CD8-positive, alpha-beta T cell (primary cell): ENCODE measurements at regions of chr15 and their contacts with region 1.

Region 1: GRCh38 chr15:78264304-78265136 is at the start of gene DNAJA4:
- DNase-seq: peak; percentile 29 to 81 (median 63)
- ATAC-seq: peak; percentile 78
- H3K4me3 ChIP-seq: peak within 1 kb of the TSS; percentile 54 to 71
- H3K4me3 Mint-ChIP-seq: peak within 1 kb of the TSS; percentile 91
- H3K27ac ChIP-seq: peak within 1 kb of the TSS; percentile 67 to 77
- H3K27ac Mint-ChIP-seq: peak within 1 kb of the TSS; percentile 96
- H3K4me1 ChIP-seq: peaks cover 15% of the 10 kb centered on the region
- H3K4me1 Mint-ChIP-seq: peaks cover 37% of the 10 kb centered on the region
- H3K27me3 ChIP-seq: no peaks in the 10 kb centered on the region
- H3K27me3 Mint-ChIP-seq: no peaks in the 10 kb centered on the region
- CTCF ChIP-seq: no peak
- total RNA-seq, gene DNAJA4: 48.9 to 52.1 TPM

Region 2: DNA sequence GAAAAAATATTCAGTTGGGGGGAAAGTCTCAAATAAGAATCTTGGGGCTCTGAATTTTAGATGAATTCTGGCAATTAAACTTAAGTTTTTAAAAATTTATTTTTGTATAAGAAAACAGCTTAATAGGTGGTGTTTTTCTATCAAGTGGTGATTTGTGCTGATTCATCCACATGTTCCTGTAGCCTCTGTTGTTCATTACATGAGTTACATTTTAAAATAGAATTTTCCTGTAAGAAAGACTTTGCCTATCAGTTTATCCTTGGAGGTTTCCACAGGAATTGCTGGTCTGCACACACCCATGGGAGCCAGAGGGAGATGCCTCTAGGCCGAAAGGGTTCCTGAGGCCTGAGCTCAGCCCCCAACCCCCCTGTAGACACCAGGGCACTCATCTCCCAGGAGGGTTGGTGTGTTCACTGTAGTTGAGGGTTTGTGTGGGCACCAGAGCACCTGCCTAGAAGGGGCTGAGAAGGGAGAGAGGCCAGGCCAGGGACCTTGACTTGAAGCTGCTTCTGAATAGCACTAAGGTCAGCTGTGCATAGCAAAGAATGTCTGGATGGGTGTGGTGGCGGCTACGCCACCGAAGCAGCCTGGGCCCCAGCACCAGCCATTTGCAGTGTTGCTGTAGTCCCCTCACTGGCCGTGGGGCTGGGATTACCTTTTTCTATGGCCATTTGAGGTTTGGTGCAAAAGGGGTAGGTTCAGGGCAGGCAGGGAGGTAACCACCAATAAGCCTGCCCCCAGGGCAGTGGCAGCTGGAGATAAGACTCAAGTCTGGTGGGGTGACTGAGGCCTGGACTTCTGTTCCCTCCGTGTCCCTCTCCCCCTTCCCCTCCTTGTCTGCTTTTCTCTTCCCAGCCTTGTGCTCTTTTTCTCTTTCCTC is 11.8 kb after region 1 on chr15:
- CTCF ChIA-PET with region 1: interaction called, 3 read pairs
- POLR2A ChIA-PET with region 1: interaction called, 10 read pairs
- intact Hi-C with region 1: no loop called
- DNase-seq: no peak
- ATAC-seq: no peak
- H3K4me3 ChIP-seq: no peak overlapping the region
- H3K4me3 Mint-ChIP-seq: no peak overlapping the region
- H3K27ac ChIP-seq: no peak overlapping the region
- H3K27ac Mint-ChIP-seq: no peak overlapping the region
- H3K4me1 ChIP-seq: no peaks in the 10 kb centered on the region
- H3K4me1 Mint-ChIP-seq: no peaks in the 10 kb centered on the region
- H3K27me3 ChIP-seq: no peaks in the 10 kb centered on the region
- H3K27me3 Mint-ChIP-seq: no peaks in the 10 kb centered on the region
- CTCF ChIP-seq: no peak

Region 3: GRCh38 chr15:78299101-78299930 is 34.8 kb after region 1 on chr15 and contains the start of gene SKIC8:
- CTCF ChIA-PET with region 1: no interaction called
- POLR2A ChIA-PET with region 1: interaction called, 52 read pairs
- intact Hi-C with region 1: loop called (anchors 2 kb)
- DNase-seq: peak; percentile 80 to 95 (median 89)
- ATAC-seq: peak; percentile 98
- H3K4me3 ChIP-seq: peak within 1 kb of the TSS; percentile 89 to 99
- H3K4me3 Mint-ChIP-seq: peak within 1 kb of the TSS; percentile 98
- H3K27ac ChIP-seq: peak within 1 kb of the TSS; percentile 73 to 84
- H3K27ac Mint-ChIP-seq: peak within 1 kb of the TSS; percentile 96
- H3K4me1 ChIP-seq: peaks cover 12% of the 10 kb centered on the region
- H3K4me1 Mint-ChIP-seq: peaks cover 34% of the 10 kb centered on the region
- H3K27me3 ChIP-seq: no peaks in the 10 kb centered on the region
- H3K27me3 Mint-ChIP-seq: no peaks in the 10 kb centered on the region
- CTCF ChIP-seq: no peak
- total RNA-seq, gene SKIC8: 18.4 to 21.2 TPM

Region 4: DNA sequence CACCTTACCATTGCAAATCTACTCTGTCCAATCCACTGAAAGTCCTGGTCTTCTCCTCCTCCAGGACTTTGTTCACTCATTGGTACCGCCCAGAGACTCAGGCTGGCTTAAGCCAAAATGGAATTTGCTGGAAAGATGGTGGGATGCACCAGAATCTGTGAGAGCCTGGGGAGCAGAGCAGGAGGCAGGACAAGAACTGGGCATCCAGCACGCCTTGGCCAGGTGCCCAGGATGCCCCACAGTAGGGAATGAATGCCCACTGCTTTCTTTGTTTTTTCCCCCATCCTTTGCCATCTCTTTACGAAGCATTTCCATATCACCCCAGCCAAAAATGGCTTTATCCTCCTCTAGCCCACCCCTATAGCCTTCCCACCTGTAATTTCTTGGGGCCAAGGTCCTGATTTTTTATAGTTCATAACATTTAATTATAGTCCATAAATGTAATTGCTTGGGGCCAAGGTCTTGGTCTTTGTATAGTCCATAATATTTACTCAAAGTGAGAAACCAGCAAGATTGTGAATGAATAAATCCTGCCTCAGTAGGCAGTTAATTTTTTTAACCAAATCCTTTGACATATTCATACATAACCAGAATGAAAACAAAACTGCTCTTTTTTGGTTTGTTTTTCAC is 150.2 kb after region 1 on chr15:
- CTCF ChIA-PET with region 1: no interaction called
- POLR2A ChIA-PET with region 1: no interaction called
- intact Hi-C with region 1: no loop called
- DNase-seq: no peak
- ATAC-seq: no peak
- H3K4me3 ChIP-seq: no peak overlapping the region
- H3K4me3 Mint-ChIP-seq: no peak overlapping the region
- H3K27ac ChIP-seq: no peak overlapping the region
- H3K27ac Mint-ChIP-seq: no peak overlapping the region
- H3K4me1 ChIP-seq: no peaks in the 10 kb centered on the region
- H3K4me1 Mint-ChIP-seq: no peaks in the 10 kb centered on the region
- H3K27me3 ChIP-seq: no peaks in the 10 kb centered on the region
- H3K27me3 Mint-ChIP-seq: peaks cover 6% of the 10 kb centered on the region
- CTCF ChIP-seq: no peak